ENCODE measurements at regions of chr6 and their contacts with region 1.

Region 1: DNA sequence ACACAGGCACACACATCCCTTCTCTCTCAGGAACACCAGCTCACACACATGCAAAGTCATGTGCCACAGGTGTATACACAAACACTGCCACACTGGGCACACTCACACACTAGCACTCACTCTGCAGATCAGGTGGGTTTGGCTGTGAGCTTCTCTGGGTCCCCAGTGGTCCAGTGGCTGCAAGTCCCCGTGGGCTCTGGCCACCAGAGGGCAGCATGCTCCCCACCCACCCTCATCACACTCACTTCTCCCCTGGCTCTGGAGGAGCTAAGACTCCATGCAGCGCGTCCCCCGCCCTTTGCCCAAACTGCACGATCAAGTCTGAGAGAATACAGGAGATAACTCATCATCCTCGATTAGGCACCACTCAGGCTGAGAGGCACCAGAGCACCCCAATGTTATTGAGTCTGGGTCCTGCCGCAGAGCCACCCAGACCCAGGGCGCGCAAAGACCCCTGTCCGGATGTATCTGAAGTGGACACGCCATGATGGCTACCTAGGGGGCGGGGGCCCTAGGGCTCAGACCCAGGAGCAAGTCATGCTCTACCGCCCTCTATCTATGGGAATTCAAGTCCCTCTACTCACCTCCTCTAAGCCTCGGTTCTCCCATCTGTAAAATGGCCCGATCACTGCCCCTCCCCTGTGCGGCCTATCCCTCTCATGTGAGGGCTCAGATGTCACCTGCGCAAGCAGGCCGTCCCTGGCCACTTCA is 90.5 kb downstream of the GRM4 start:
- DNase-seq: peak; percentile 43 to 52
- H3K4me3 ChIP-seq: no peak overlapping the region
- H3K27ac ChIP-seq: no peak overlapping the region
- H3K4me1 ChIP-seq: no peaks in the 10 kb centered on the region
- H3K27me3 ChIP-seq: peaks cover 79% of the 10 kb centered on the region
- CTCF ChIP-seq: peak; percentile 75

Region 2: DNA sequence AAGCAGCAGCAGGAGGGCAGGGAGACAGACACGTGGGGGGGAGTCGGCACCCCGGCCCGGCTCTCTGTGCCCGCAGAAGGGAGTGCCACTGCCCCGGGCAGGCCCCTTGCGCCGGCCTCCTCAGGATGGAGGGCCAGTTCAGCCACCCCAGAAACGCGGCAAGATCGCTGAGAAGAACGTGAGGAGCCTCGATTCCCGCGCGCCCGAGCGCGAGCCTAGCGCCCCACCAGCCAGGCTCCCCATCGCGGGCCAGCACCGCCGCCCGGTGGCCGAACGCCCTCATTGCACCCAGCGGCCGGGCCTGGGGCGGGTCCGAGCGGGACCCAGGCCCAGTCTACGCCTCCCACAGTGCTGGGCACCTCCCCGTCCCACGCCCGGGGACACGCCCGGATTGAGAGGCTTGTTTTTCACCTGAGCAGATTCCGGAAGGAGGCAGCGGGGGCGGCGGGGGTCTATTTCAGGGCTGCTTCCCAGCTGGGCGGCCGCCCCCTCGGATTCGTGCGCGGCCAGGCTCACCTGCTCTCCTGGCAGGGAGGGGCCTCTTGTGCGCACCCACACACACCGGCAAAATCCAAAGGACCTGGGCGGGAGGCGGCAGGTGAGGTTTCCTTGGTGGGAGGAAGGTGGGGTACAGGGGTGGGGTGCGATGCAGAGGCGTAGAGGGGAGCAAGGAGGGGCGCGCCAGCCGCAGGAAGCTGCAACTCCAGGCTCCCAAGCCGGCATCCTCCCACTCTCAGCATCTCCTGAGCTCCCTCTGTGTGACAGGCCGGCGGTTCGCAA is 99.5 kb after region 1 on chr6:
- CTCF ChIA-PET with region 1: no interaction called
- POLR2A ChIA-PET with region 1: no interaction called
- intact Hi-C with region 1: loop called (anchors 2 kb)
- DNase-seq: peak in 1 of 2 experiments; percentile 50
- H3K4me3 ChIP-seq: peak overlapping the region; percentile 39; the same call in 1 of the 2 replicates
- H3K27ac ChIP-seq: no peak overlapping the region
- H3K4me1 ChIP-seq: no peaks in the 10 kb centered on the region
- H3K27me3 ChIP-seq: peaks cover 42% of the 10 kb centered on the region
- CTCF ChIP-seq: peak; percentile 96

Region 3: GRCh38 chr6:35076997-35077712 is 1021.8 kb after region 1 on chr6:
- CTCF ChIA-PET with region 1: no interaction called
- POLR2A ChIA-PET with region 1: no interaction called
- intact Hi-C with region 1: no loop called
- DNase-seq: no peak
- H3K4me3 ChIP-seq: no peak overlapping the region
- H3K27ac ChIP-seq: no peak overlapping the region
- H3K4me1 ChIP-seq: no peaks in the 10 kb centered on the region
- H3K27me3 ChIP-seq: no peaks in the 10 kb centered on the region
- CTCF ChIP-seq: no peak